Prostate gland (tissue), 2 donors: ENCODE measurements at regions of chr6 and their contacts with region 1.

Region 1: GRCh38 chr6:164882236-164882635 is 427.2 kb downstream of the C6orf118 start:
- DNase-seq: no peak
- H3K4me3 ChIP-seq: no peak overlapping the region
- H3K27ac ChIP-seq: no peak overlapping the region
- H3K4me1 ChIP-seq: no peaks in the 10 kb centered on the region
- H3K27me3 ChIP-seq: no peaks in the 10 kb centered on the region
- CTCF ChIP-seq: no peak
- POLR2A ChIP-seq: no peak

Region 2: DNA sequence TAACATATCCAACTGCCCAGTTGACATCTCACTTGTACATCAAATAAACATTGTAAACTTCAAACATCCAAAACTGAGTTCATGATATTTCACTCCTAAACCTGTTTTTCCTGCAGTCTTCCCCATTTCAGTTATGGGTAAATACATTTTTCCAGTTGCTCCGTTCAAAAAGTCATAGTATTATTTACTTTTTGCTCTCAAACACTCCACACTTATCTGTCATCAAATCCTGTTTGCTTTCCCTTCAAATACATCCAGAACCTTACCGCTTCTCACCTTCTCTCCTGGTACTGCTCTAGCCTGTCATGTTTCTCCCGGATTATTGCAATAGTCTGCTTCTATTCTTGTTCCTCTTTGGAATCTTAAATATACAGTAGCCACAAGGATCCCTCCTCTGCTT is 599.2 kb before region 1 on chr6:
- intact Hi-C with region 1: loop called (anchors 5 kb)
- DNase-seq: no peak
- H3K4me3 ChIP-seq: no peak overlapping the region
- H3K27ac ChIP-seq: no peak overlapping the region
- H3K4me1 ChIP-seq: no peaks in the 10 kb centered on the region
- H3K27me3 ChIP-seq: no peaks in the 10 kb centered on the region
- CTCF ChIP-seq: no peak
- POLR2A ChIP-seq: no peak